ENCODE measurements at regions of chr2 and their contacts with region 1.

Region 1: DNA sequence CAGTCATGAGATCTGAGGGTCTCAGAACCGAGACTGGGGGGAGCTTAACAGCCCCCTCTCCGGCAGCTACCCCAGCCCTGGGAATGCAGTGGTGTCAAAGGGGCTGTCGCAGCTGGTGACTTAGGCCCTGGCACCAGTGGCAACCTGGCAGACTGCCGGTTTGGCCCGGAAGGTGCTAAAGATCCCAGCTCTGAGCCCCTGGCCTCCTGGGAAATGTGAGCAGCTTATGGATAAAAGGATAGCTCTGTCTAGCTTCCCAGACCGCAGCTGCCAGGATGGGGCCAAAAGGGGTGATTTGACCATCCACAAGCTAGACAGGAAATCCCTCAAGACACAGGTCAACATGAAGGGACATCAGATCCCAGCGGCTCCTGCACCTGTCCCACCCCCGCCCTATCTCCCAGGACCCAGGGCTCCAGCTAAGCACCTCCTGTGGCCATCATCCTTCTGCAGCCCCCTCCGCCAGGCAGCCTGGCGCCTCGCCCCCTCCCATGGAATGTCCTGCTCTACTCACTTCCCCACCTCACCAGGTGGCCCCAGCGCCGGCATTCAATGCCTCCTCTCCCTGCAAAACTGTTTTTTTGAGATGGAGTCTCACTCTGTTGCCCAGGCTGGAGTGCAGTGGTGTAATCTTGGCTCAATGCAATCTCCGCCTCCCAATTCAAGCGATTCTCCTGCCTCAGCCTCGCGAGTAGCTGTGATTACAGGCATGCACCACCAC is 33.2 kb upstream of the EFHD1 start:
- DNase-seq: no peak
- H3K4me3 ChIP-seq: no peak overlapping the region
- H3K27ac ChIP-seq: no peak overlapping the region
- H3K4me1 ChIP-seq: no peaks in the 10 kb centered on the region
- H3K27me3 ChIP-seq: no peaks in the 10 kb centered on the region
- CTCF ChIP-seq: no peak

Region 2: DNA sequence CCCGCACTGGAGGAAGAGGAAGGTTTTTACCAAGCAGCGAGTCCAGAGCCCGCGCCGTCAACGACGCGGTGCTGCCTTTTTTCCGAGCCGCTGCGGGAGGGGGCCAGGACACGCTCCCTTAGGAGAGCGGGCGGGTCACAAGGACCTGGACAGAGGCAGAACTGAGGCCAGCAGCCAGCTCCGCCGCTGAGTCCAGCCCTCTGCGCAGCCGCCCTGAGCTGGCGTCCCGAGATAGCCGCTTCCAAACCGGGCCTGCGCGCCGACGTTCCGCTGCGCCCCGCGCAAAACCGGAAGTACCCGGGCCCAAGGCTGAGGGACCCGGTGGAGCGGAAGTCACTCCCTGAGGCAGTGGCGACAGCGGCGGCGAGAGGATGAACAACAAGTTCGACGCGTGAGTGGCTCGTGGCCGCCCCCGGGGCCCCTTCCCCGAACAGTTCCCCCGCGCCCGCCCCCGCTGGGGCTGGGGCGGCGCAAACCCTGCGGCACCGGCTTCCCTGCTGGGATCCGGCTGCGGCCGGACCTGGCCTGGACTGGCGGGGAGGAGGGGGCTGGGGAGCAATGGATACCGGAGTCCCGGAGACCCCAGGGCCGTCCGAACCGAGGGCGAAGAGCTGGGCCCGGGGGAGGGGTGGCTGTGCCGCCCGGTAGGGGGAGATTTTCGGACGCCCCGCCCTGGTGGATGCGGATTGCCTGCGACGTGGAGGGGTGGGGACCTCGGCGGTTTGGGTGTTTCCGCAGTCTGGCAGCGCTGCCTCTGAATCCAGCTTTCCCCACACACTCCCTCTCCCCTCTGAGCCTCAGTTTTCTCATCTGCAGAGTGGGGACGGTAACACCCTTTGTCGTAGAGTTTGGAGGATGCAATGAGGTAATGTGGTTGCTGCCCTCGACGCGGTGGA is 49.6 kb before region 1 on chr2 and contains the starts of genes EIF4E2 and TIGD1:
- intact Hi-C with region 1: loop called (anchors 10 kb)
- DNase-seq: peak; percentile 94
- H3K4me3 ChIP-seq: peak within 1 kb of the TSS; percentile 92
- H3K27ac ChIP-seq: peak within 1 kb of the TSS; percentile 98
- H3K4me1 ChIP-seq: peaks cover 8% of the 10 kb centered on the region
- H3K27me3 ChIP-seq: no peaks in the 10 kb centered on the region
- CTCF ChIP-seq: peak; percentile 9
- total RNA-seq, gene EIF4E2: 99.5 to 109 TPM
- total RNA-seq, gene TIGD1: 3.0 to 4.4 TPM

Measured in colonic mucosa (tissue), 4 donors.